ENCODE measurements at regions of chr1 and their contacts with region 1.

Region 1: DNA sequence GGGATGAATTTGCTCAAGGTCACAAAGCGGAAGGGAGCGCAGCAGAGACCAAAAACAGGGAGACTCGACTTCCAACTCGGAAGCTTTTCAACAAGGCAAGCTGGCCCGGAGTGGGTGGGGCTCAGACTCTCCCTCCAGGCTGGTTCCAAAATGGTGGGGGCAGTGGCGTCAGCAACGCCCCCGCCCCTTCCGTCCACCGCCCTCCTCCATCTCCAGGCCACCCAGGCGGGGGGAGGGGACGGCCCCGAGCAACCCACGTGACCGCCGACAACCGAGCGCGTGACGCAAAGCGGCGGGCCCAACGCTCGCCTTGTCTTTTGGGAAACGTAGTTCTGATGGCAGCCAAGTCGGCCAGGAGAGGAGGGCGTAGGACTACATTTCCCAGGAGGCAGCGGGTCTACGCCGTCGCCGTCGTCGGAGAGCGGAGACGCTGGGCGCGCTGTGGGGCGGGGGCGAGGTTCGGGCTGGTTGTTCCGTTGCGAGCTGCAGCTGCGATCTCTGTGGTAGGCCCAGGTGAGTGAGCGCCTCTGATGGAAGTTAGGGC is at the start of gene THRAP3:
- DNase-seq: peak; percentile 99 to 100
- ATAC-seq: peak; percentile 85 to 86
- H3K4me3 ChIP-seq: peak within 1 kb of the TSS; percentile 69 to 97 (median 90)
- H3K27ac ChIP-seq: peak within 1 kb of the TSS; percentile 94 to 99 (median 98)
- H3K4me1 ChIP-seq: peaks cover 38 to 51% of the 10 kb centered on the region in 2 donors
- H3K27me3 ChIP-seq: no peaks in the 10 kb centered on the region
- CTCF ChIP-seq: no peak
- POLR2A ChIP-seq: peak; percentile 99 to 100
- total RNA-seq, gene THRAP3: 88.2 to 174 (median 146) TPM

Region 2: DNA sequence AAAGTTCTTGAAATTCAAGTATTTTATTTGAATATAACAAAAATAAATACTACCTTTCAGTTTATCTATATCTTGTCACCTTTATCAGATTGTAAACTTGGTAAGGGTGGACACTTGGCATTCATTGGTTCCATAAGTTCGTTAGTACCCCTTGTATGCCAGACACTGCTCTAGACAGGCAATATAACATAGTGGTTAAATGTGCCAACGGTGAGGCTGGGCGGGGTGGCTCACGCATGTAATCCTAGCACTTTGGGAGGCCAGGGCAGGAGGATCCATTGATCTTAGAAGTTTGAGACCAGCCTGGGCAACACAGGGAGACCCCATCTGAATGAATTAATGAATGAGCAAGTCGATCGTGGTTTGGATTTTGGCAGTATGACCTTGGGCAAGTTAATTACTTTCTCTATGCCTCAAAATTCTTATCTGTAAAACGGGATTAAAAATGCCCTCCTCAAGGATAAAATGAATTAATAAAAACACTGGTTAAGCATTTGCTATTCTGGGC is 55.8 kb after region 1 on chr1:
- in situ Hi-C with region 1: loop called in 1 of 4 experiments (anchors 5 kb)
- intact Hi-C with region 1: loop called (anchors 2 kb)
- DNase-seq: peak in 1 of 2 donors; percentile 41
- ATAC-seq: peak in 1 of 2 donors; percentile 34
- H3K4me3 ChIP-seq: no peak overlapping the region
- H3K27ac ChIP-seq: peak overlapping the region; percentile 89 to 92 (median 90)
- H3K4me1 ChIP-seq: peaks cover 60 to 83% of the 10 kb centered on the region in 2 donors
- H3K27me3 ChIP-seq: no peaks in the 10 kb centered on the region
- CTCF ChIP-seq: no peak
- POLR2A ChIP-seq: no peak

Measured in gastrocnemius medialis (tissue), 4 donors.